Activated CD4-positive, alpha-beta memory T cell treated with anti-CD3 and anti-CD28 coated beads for 36 hours (primary cell): ENCODE measurements at regions of chr4 and their contacts with region 1.

Region 1: GRCh38 chr4:88823058-88823919 is 125.7 kb upstream of the NAP1L5 start:
- DNase-seq: peak; percentile 79
- H3K4me3 Mint-ChIP-seq: peak overlapping the region; percentile 87
- H3K27ac Mint-ChIP-seq: peak overlapping the region; percentile 84
- H3K4me1 Mint-ChIP-seq: peaks cover 37% of the 10 kb centered on the region
- H3K27me3 Mint-ChIP-seq: no peaks in the 10 kb centered on the region

Region 2: DNA sequence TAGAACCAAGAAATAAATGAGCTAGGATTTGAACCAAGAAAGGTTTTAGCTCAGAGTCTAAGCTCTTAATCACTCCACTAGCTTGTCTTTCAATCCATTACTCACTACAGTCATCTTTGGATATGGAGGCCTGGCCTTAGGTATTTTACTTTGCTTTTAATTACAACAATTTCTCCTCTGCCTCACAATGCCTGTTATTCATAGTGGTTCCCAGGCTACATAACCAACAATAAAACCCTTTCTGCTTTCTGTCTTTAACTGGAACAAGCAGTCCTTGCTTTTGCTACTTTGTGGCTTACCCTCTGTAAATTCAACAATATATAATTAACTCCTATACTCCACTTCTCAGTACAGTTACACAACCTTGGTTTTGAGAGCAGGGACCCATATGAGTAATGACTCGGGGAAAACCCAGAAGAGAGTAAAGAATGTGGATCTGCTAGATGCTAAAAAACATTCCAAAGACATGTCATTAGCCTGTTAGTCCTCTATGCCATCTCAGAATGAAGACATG is 31.0 kb before region 1 on chr4:
- CTCF ChIA-PET with region 1: interaction called, 6 read pairs
- POLR2A ChIA-PET with region 1: no interaction called
- intact Hi-C with region 1: loop called (anchors 2 kb)
- DNase-seq: no peak
- H3K4me3 Mint-ChIP-seq: no peak overlapping the region
- H3K27ac Mint-ChIP-seq: no peak overlapping the region
- H3K4me1 Mint-ChIP-seq: peaks cover 19% of the 10 kb centered on the region
- H3K27me3 Mint-ChIP-seq: peaks cover under 1% of the 10 kb centered on the region

Region 3: GRCh38 chr4:88803600-88804096 is 19.6 kb before region 1 on chr4:
- CTCF ChIA-PET with region 1: interaction called, 8 read pairs
- POLR2A ChIA-PET with region 1: no interaction called
- intact Hi-C with region 1: loop called (anchors 2 kb)
- DNase-seq: peak; percentile 26
- H3K4me3 Mint-ChIP-seq: no peak overlapping the region
- H3K27ac Mint-ChIP-seq: no peak overlapping the region
- H3K4me1 Mint-ChIP-seq: peaks cover 18% of the 10 kb centered on the region
- H3K27me3 Mint-ChIP-seq: peaks cover 7% of the 10 kb centered on the region

Region 4: GRCh38 chr4:88964450-88964849 is 141.2 kb after region 1 on chr4:
- CTCF ChIA-PET with region 1: no interaction called
- POLR2A ChIA-PET with region 1: no interaction called
- intact Hi-C with region 1: loop called (anchors 5 kb)
- DNase-seq: peak; percentile 15
- H3K4me3 Mint-ChIP-seq: no peak overlapping the region
- H3K27ac Mint-ChIP-seq: no peak overlapping the region
- H3K4me1 Mint-ChIP-seq: peaks cover 9% of the 10 kb centered on the region
- H3K27me3 Mint-ChIP-seq: peaks cover 2% of the 10 kb centered on the region

Region 5: DNA sequence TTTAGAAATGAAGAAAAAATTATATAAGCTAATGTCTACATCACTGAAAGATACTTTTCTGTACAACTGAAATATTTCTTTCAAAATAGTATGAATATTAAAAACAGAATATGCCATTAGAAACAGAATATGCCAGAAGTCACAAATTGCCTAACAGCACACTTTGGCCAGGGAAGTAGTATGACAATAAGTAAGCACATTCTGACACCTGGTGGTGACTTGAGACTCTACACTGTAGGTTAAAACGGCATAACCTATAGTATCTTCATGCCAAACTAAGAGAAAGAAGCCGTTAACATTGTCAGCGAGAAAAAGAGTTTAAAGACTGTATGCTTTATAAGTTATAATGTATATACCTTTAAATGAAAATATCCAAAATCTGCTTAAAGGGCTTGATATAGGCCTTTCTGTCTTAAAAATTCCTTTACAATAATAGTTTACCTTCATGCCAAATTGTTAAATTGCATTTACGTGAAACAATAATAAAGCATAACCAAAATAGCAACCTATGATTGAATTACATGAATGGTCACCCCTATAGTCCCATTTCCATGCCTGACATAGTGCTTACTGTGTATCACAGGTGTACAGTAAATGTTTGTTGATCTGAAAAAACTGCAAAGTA is 200.9 kb after region 1 on chr4:
- CTCF ChIA-PET with region 1: interaction called, 143 read pairs
- POLR2A ChIA-PET with region 1: interaction called, 3 read pairs
- intact Hi-C with region 1: loop called (anchors 1 kb)
- DNase-seq: peak; percentile 33
- H3K4me3 Mint-ChIP-seq: no peak overlapping the region
- H3K27ac Mint-ChIP-seq: no peak overlapping the region
- H3K4me1 Mint-ChIP-seq: peaks cover 5% of the 10 kb centered on the region
- H3K27me3 Mint-ChIP-seq: no peaks in the 10 kb centered on the region

Region 6: DNA sequence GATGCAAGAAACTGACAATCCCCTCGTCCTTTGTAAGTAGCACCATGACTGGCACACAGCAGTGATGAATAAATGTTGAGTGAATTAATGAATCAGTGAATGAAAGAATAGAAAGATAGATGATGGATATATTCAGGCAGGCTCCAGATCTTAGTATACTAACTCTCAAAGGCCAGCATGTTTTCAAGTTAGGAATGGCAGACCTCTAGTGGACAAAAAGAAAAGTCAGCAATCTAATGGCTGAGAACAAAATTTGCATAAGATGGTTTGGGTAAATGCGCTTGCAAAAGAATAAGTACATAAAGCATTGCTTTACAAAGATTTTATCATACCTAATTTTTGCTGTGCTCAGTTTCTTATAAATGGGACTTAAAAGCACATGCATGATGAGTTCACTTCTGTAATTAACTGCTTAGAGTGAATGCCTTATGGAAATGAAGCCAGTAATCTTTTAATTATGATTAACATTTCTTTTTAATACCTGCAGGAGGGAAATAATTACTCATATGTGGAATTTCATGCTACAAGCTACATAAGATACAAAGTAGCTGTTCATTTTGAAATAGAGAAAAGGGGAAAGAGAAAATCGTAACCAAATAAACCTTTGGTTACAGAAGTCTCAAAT is 611.2 kb after region 1 on chr4:
- CTCF ChIA-PET with region 1: no interaction called
- POLR2A ChIA-PET with region 1: no interaction called
- intact Hi-C with region 1: loop called (anchors 2 kb)
- DNase-seq: no peak
- H3K4me3 Mint-ChIP-seq: no peak overlapping the region
- H3K27ac Mint-ChIP-seq: no peak overlapping the region
- H3K4me1 Mint-ChIP-seq: peaks cover 12% of the 10 kb centered on the region
- H3K27me3 Mint-ChIP-seq: no peaks in the 10 kb centered on the region